Dorsolateral prefrontal cortex (tissue), 120 donors: ENCODE measurements at regions of chr1 and their contacts with region 1.

Region 1: GRCh38 chr1:41622859-41623723 is 138.6 kb upstream of the EDN2 start:
- DNase-seq: no peak
- H3K4me3 ChIP-seq: peak overlapping the region in 1 of 59 donors; percentile 19
- H3K27ac ChIP-seq: peak overlapping the region in 3 of 59 donors; percentile 5 to 50 (median 33)
- H3K27me3 ChIP-seq: no peaks in the 10 kb centered on the region
- CTCF ChIP-seq: no peak

Region 2: DNA sequence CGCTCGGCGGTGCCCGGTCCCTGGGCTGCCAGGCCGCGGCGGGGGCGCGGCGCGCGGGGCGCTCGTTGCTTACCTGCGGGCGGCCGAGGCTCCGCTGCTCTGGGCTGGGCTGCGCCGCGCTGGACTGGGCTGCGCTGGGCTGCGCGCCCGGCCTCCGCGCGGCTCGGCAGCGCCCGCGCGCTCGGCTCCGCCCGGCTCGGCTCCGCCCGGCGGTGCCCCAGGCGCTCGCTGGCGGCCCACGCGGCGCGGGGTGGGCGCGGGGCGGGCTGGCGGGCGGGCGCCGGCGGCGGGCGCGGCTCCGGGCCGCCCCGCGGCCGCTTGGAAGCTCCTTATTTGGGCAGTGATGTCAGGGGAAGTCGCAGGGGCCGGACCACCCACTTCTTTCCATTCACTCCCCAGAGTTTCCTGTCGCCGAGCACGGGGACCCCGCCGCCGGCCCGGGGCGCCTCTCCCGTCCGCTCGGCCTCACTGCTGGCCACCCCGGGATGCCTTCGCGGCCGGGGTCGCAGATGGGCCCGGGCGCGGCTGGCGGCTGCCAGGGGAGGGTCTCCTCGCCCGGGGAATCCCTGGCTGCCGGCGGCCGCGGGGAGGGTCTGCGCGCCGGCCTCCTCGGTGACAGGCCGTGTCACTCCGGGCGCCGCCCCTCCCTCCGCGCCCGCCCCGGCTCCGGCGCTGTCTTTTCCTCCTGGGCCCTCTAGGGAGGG is 39.1 kb after region 1 on chr1:
- intact Hi-C with region 1: loop called in 1 of 2 experiments (anchors 5 kb)
- DNase-seq: peak in 8 of 10 donors; percentile 37 to 79 (median 66)
- H3K4me3 ChIP-seq: peak overlapping the region; percentile 49 to 83 (median 73)
- H3K27ac ChIP-seq: peak overlapping the region in 57 of 59 donors; percentile 39 to 92 (median 82)
- H3K27me3 ChIP-seq: no peaks in the 10 kb centered on the region
- CTCF ChIP-seq: no peak